ENCODE measurements at regions of chr6 and their contacts with region 1.

Region 1: DNA sequence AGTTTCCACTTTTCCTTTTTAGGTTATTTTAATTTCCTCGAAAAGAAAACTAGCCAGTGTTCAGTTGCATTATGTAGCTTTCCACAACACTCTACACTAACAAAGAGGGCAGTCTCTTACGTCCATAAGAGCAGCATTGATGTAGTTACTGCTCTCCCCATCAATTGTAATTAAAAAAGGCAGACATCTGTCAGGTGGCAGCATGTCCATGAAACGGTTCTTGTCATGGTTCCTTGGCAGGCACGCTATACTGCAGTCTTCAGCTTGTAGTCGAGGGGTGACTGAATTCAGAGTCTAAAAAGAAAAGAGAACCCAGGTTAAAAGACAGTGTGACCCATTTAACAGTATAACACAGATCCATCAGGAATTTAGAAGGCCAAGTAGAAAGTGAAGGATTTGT is 80.1 kb upstream of the THEMIS start:
- DNase-seq: no peak
- ATAC-seq: no peak
- H3K4me3 ChIP-seq: no peak overlapping the region
- H3K4me3 Mint-ChIP-seq: no peak overlapping the region
- H3K27ac ChIP-seq: no peak overlapping the region
- H3K27ac Mint-ChIP-seq: no peak overlapping the region
- H3K4me1 ChIP-seq: peaks cover 6% of the 10 kb centered on the region
- H3K4me1 Mint-ChIP-seq: peaks cover 27% of the 10 kb centered on the region
- H3K27me3 ChIP-seq: no peaks in the 10 kb centered on the region
- H3K27me3 Mint-ChIP-seq: no peaks in the 10 kb centered on the region
- CTCF ChIP-seq: no peak

Region 2: GRCh38 chr6:127864701-127865100 is 116.3 kb before region 1 on chr6:
- CTCF ChIA-PET with region 1: no interaction called
- POLR2A ChIA-PET with region 1: no interaction called
- intact Hi-C with region 1: no loop called
- DNase-seq: no peak
- ATAC-seq: no peak
- H3K4me3 ChIP-seq: no peak overlapping the region
- H3K4me3 Mint-ChIP-seq: no peak overlapping the region
- H3K27ac ChIP-seq: no peak overlapping the region
- H3K27ac Mint-ChIP-seq: peak overlapping the region; percentile 63
- H3K4me1 ChIP-seq: peaks cover 13% of the 10 kb centered on the region
- H3K4me1 Mint-ChIP-seq: peaks cover 72% of the 10 kb centered on the region
- H3K27me3 ChIP-seq: no peaks in the 10 kb centered on the region
- H3K27me3 Mint-ChIP-seq: no peaks in the 10 kb centered on the region
- CTCF ChIP-seq: no peak

Region 3: GRCh38 chr6:128000363-128000762 is 19.4 kb after region 1 on chr6:
- CTCF ChIA-PET with region 1: no interaction called
- POLR2A ChIA-PET with region 1: interaction called, 3 read pairs
- intact Hi-C with region 1: loop called in 1 of 2 experiments (anchors 2 kb)
- DNase-seq: no peak
- ATAC-seq: no peak
- H3K4me3 ChIP-seq: no peak overlapping the region
- H3K4me3 Mint-ChIP-seq: no peak overlapping the region
- H3K27ac ChIP-seq: no peak overlapping the region
- H3K27ac Mint-ChIP-seq: no peak overlapping the region
- H3K4me1 ChIP-seq: no peaks in the 10 kb centered on the region
- H3K4me1 Mint-ChIP-seq: peaks cover 42% of the 10 kb centered on the region
- H3K27me3 ChIP-seq: no peaks in the 10 kb centered on the region
- H3K27me3 Mint-ChIP-seq: no peaks in the 10 kb centered on the region
- CTCF ChIP-seq: no peak